K562 (cell line): ENCODE measurements at regions of chr7 and their contacts with region 1.

Region 1: DNA sequence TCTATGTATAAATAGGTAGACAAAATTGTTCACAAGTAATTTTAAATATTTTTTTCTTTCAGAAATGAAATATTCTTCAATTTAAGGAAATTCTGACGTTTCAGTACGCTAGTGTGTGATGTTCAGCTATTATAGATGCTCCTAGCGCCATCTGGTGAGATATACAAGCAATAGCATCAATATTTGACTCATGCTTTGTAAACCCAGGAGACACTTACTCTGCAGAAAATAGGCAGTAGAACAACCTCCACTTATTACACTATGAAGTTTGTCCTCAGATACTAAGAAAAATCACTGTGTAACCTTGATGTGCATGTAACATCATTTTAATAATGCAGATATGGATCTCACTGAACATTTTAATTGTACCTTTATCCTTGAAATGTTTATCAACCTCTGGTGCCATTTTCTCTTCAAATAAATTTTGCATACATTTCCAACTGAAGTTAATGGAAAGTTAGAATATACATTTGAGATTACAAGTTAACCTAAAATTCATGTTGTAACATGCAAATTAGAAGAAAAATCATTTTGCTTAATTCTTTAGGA is 151.5 kb upstream of the FAM3C start:
- DNase-seq: peak; percentile 62 to 77 (median 72)
- ATAC-seq: peak; percentile 95
- H3K4me3 ChIP-seq: no peak overlapping the region
- H3K27ac ChIP-seq: no peak overlapping the region
- H3K4me1 ChIP-seq: no peaks in the 10 kb centered on the region
- H3K27me3 ChIP-seq: no peaks in the 10 kb centered on the region
- CTCF ChIP-seq: peak; percentile 70 to 95 (median 77)
- EP300 ChIP-seq: no peak
- POLR2A ChIP-seq: no peak
- RAD21 ChIP-seq: peak; percentile 99 to 100

Region 2: GRCh38 chr7:121138262-121138933 is 409.2 kb before region 1 on chr7:
- CTCF ChIA-PET with region 1: no interaction called
- POLR2A ChIA-PET with region 1: no interaction called
- in situ Hi-C with region 1: no loop called
- intact Hi-C with region 1: loop called (anchors 10 kb)
- DNase-seq: peak in 1 of 4 experiments; percentile 38
- ATAC-seq: peak; percentile 91
- H3K4me3 ChIP-seq: no peak overlapping the region
- H3K27ac ChIP-seq: no peak overlapping the region; the same call in 2 of the 3 replicates
- H3K4me1 ChIP-seq: no peaks in the 10 kb centered on the region
- H3K27me3 ChIP-seq: no peaks in the 10 kb centered on the region
- CTCF ChIP-seq: no peak
- EP300 ChIP-seq: peak; percentile 92
- POLR2A ChIP-seq: no peak
- RAD21 ChIP-seq: no peak

Region 3: GRCh38 chr7:121360564-121360963 is 187.1 kb before region 1 on chr7:
- CTCF ChIA-PET with region 1: interaction called, 104 read pairs
- POLR2A ChIA-PET with region 1: interaction called, 3 read pairs
- in situ Hi-C with region 1: loop called (anchors 5 kb)
- intact Hi-C with region 1: no loop called
- DNase-seq: no peak
- ATAC-seq: no peak; the same call in 2 of the 3 replicates
- H3K4me3 ChIP-seq: no peak overlapping the region
- H3K27ac ChIP-seq: no peak overlapping the region
- H3K4me1 ChIP-seq: no peaks in the 10 kb centered on the region
- H3K27me3 ChIP-seq: no peaks in the 10 kb centered on the region
- CTCF ChIP-seq: no peak
- EP300 ChIP-seq: no peak
- POLR2A ChIP-seq: no peak
- RAD21 ChIP-seq: no peak

Region 4: DNA sequence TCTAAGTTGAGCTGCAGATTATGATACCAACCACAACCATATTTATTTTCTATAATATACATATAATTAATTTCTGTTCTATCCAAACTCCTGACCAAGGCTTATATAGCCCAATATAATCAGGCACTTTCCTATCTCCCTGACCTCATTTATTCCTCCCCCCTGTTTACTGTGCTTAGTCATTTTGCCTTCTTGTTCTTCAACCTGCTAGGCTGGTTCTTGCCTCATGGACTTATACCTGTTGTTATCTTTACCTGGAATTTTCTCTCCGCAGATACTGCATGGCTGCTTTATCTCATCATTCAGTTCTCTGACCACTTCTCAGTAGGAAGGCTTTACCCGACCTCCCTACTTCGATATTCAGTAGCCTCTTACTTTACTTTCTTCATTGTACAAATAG is 126.6 kb before region 1 on chr7:
- CTCF ChIA-PET with region 1: no interaction called
- POLR2A ChIA-PET with region 1: no interaction called
- in situ Hi-C with region 1: no loop called
- intact Hi-C with region 1: no loop called
- DNase-seq: peak in 1 of 4 experiments; percentile 2
- ATAC-seq: 0 out of 3 replicates have a peak, but pooled peaks have one; percentile 32
- H3K4me3 ChIP-seq: no peak overlapping the region
- H3K27ac ChIP-seq: no peak overlapping the region
- H3K4me1 ChIP-seq: peaks cover 0 to 7% of the 10 kb centered on the region in 2 experiments; a peak in 2 of 5 replicates
- H3K27me3 ChIP-seq: peaks cover 4% of the 10 kb centered on the region in 2 experiments; a peak in 2 of 5 replicates
- CTCF ChIP-seq: no peak
- EP300 ChIP-seq: no peak
- POLR2A ChIP-seq: no peak
- RAD21 ChIP-seq: no peak

Region 5: DNA sequence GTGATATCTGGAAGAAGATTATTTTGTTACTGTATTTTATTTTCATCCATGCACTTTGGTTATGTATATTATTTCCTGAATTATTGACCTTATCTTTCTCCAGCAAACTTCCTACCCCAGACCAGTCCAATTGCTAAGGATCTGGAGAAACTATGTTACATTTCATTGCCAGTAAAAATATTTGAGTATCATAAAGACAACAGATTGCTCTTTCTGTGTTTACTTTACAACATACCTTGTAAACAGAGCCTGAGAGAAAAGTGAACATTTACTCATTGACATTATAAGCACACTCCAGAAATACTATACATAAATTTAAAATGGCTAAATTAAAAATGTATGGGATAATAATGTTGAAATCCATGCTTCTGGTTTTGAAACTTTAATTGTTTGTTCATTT is 34.6 kb after region 1 on chr7:
- CTCF ChIA-PET with region 1: no interaction called
- POLR2A ChIA-PET with region 1: no interaction called
- in situ Hi-C with region 1: no loop called
- intact Hi-C with region 1: no loop called
- DNase-seq: no peak
- ATAC-seq: no peak
- H3K4me3 ChIP-seq: no peak overlapping the region
- H3K27ac ChIP-seq: no peak overlapping the region
- H3K4me1 ChIP-seq: no peaks in the 10 kb centered on the region
- H3K27me3 ChIP-seq: no peaks in the 10 kb centered on the region
- CTCF ChIP-seq: no peak
- EP300 ChIP-seq: no peak
- POLR2A ChIP-seq: no peak
- RAD21 ChIP-seq: no peak